Kidney (tissue), 22 donors: ENCODE measurements at regions of chr5 and their contacts with region 1.

Region 1: DNA sequence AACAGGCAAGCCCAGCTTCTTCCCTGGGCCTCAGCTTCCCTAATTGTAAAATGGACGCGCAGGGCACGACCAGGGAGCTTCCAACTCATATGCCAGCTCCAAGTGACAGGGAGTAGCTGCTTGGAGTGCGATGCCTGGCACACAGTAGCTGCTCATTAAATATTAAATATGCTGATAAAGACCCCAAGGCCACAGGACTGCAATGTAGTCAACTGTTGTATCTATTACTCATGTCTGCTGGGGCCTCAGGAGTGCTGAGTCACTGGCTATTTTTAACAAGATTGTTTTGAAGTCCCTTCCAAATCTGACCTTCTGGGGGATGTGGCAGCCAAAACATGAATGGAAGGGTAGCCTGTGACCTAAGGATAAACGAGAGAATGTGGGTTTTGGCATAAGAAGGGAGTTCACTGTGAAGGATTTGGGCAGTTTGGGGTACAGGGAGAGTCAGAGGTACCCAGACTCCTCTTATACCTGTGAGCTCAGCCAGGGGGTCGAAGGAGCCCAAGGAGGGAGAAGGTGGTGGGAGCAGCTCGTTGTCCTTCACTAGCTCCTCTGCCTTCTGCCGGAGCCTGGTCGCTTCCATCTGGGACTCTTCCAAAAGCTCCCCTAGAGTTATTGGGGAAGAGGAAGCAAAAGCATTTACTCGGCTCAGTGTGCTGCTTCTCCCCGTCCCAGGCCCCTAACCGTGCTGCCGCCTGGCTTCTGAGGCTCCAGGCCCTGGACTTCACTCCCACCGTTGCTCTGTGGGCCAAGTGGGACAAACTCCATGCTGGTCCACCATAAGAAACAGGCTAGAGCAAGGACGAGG is 17.5 kb downstream of the TNIP1 start:
- DNase-seq: no peak
- H3K4me3 ChIP-seq: no peak overlapping the region
- H3K27ac ChIP-seq: peak overlapping the region; percentile 73 to 82
- H3K4me1 ChIP-seq: peaks cover 0 to 79% (median 76%) of the 10 kb centered on the region in 3 donors
- H3K27me3 ChIP-seq: no peaks in the 10 kb centered on the region
- CTCF ChIP-seq: no peak

Region 2: GRCh38 chr5:149730620-149731388 is 1332.5 kb before region 1 on chr5:
- intact Hi-C with region 1: no loop called
- DNase-seq: peak; percentile 38 to 88 (median 39)
- H3K4me3 ChIP-seq: peak overlapping the region; percentile 11 to 80 (median 70)
- H3K27ac ChIP-seq: peak overlapping the region; percentile 72 to 85
- H3K4me1 ChIP-seq: peaks cover 0 to 5% (median 2%) of the 10 kb centered on the region in 3 donors
- H3K27me3 ChIP-seq: no peaks in the 10 kb centered on the region
- CTCF ChIP-seq: no peak

Region 3: GRCh38 chr5:151104795-151105194 is 41.4 kb after region 1 on chr5:
- intact Hi-C with region 1: loop called (anchors 5 kb)
- DNase-seq: peak in 1 of 5 donors; percentile 81
- H3K4me3 ChIP-seq: no peak overlapping the region
- H3K27ac ChIP-seq: no peak overlapping the region
- H3K4me1 ChIP-seq: peaks cover 0 to 33% (median 25%) of the 10 kb centered on the region in 3 donors
- H3K27me3 ChIP-seq: no peaks in the 10 kb centered on the region
- CTCF ChIP-seq: no peak